Dendritic cell treated with granulocyte-macrophage colony-stimulating factor and Interleukin-4, amounts not matched to agents 40 ng/mL and 50 ng/mL, for 4 days (primary cell): ENCODE measurements at regions of chr11 and their contacts with region 1.

Region 1: DNA sequence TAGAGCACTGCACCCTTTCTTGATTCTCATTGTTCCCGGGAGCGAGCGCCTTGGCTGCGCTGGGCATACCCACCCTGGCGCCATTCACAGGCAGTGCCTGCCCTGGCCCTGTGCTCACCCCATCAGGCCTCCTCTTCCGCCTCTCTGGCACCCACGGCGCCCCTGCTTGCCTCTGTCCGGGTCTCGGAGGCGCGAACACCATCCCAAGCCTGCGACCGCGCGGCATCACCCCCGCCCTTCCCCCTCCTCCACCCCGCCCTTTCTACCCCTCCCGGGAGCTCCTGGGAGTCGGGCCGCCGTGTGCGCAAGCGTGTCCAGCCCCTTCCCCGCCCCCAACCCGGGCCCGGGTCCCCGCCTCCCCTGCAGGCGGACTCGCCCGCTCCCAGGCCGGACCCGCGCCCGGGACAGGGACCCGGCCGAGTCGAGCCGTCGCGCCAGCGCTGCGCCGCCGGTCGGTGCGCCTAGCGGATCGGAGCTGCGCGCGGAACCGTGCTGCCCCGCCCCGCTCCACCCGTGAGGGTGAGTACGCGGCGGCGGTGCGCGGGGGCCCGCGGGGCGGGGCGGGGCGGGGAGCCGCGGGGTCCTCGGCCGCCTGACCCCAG is at the start of gene ST3GAL4:
- H3K4me3 Mint-ChIP-seq: peak within 1 kb of the TSS; percentile 88
- H3K27ac Mint-ChIP-seq: peak within 1 kb of the TSS; percentile 84
- H3K4me1 Mint-ChIP-seq: peaks cover 80% of the 10 kb centered on the region
- H3K27me3 Mint-ChIP-seq: no peaks in the 10 kb centered on the region

Region 2: GRCh38 chr11:125925247-125925740 is 430.1 kb before region 1 on chr11:
- intact Hi-C with region 1: no loop called
- H3K4me3 Mint-ChIP-seq: no peak overlapping the region
- H3K27ac Mint-ChIP-seq: no peak overlapping the region
- H3K4me1 Mint-ChIP-seq: peaks cover 10% of the 10 kb centered on the region
- H3K27me3 Mint-ChIP-seq: peaks cover 6% of the 10 kb centered on the region

Region 3: GRCh38 chr11:126391970-126392639 is 36.7 kb after region 1 on chr11:
- intact Hi-C with region 1: loop called (anchors 5 kb)
- H3K4me3 Mint-ChIP-seq: no peak overlapping the region
- H3K27ac Mint-ChIP-seq: peak overlapping the region; percentile 71
- H3K4me1 Mint-ChIP-seq: peaks cover 41% of the 10 kb centered on the region
- H3K27me3 Mint-ChIP-seq: no peaks in the 10 kb centered on the region

Region 4: DNA sequence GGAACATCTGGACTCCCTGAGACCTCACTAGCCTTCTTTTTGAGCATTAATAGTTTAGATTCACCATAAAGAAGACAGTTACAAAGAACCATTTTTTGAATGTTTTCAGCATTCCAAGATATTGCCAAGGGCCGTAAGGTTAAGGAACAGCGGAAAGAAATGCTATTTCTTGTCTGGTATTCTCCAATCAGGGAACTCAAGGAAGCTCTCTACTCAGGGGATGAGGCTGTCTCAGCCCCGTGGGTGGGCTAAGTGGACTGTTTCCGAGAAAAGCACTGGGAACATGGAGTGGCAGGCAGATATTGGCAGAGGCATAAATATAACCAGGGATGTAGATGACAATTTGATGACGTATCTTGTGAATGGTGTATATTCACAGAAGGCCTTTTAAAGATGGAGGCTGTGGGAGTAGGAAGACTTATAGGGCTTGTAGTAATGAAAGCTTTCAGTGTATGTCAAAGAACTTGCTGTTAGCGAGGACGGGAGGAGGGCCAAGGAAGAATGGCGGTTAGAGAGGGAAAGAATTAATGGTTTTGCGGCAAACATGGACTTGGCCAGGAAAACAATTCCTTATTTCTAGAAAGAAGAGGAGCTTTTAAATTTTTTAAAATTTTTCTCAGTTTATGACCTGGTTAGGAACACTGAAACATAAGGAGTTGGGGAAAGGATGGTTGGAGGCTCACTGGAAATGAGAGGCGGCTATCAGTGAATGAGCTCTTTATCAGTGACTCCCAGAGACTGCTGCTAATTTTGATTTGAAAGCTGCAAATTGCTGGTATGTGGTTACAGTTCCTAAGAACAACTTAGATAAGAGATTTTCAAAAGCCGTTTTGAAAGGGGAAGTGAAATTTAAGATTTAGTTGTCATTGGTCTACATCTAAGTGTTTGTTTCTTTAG is 64.6 kb after region 1 on chr11:
- intact Hi-C with region 1: loop called (anchors 2 kb)
- H3K4me3 Mint-ChIP-seq: peak overlapping the region; percentile 44
- H3K27ac Mint-ChIP-seq: peak overlapping the region; percentile 88
- H3K4me1 Mint-ChIP-seq: peaks cover 62% of the 10 kb centered on the region
- H3K27me3 Mint-ChIP-seq: no peaks in the 10 kb centered on the region

Region 5: DNA sequence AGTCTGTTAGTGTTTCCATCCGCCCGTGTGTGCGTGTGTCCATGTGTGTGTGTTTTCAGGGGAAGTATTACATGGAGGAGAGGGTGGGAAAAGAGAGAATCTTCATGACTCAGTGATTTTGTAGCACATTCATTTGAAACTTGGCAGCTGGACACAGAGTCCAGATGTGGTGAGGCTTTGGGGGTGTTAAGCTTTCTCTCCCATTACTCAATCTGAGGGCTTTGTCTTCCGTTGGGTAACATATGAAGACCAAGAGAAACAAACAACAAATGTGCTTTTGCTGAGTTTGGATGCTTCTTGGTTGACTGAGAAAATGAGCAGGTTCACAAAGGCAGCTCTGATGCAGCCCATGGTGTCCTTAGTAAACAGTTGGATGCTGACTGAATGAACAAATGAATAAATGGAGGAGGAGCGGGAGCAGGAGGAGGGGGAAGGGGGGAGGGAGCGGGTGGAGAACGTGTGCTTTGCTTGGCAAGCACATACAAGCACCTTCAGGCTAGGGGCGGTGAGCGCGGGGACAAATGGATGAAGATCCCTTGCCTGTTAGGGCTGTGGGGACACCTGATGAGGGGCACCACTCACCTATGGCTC is 104.4 kb after region 1 on chr11:
- intact Hi-C with region 1: no loop called
- H3K4me3 Mint-ChIP-seq: no peak overlapping the region
- H3K27ac Mint-ChIP-seq: no peak overlapping the region
- H3K4me1 Mint-ChIP-seq: peaks cover 15% of the 10 kb centered on the region
- H3K27me3 Mint-ChIP-seq: peaks cover 3% of the 10 kb centered on the region